ENCODE measurements at regions of chr16 and their contacts with region 1.

Region 1: DNA sequence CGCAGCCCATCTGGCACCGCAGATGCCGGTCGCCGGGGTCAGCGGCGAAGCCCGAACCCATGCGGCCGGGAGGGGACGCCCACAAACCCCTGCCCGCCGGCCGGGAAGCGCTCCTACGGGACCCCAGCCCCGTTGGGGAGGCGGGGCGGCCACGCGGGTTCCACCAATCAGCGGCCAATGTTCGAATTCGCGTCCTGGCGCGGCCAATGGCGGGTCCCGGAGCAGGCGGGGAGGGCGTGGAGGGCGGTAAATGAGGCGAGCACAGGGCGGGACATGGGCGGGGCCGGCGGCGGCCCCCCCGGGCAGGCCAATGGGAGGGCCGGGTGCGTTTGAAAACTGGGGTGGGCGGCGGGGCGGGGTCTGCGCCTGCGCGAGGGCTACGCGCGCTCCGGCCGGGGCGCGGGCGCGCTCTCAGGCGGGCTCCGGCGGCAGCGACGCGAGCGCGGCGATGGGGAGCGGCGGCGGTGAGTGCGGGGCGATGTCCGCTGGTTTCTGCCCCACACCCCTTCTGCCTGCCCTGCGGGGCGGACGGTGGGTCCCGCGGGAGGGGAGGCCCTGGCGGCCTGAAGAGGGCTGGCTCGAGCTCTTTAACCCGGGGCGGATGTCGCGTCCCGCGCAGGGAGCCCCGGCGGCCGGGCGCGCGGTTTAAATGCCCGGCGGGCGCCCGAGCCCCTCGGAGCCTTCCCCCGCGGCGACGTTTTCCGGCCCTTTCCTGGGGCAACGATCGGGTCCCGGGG is at the start of gene CCNF:
- DNase-seq: peak; percentile 95
- H3K4me3 Mint-ChIP-seq: peak within 1 kb of the TSS; percentile 99
- H3K27ac Mint-ChIP-seq: peak within 1 kb of the TSS; percentile 88
- H3K4me1 Mint-ChIP-seq: peaks cover 27% of the 10 kb centered on the region
- H3K27me3 Mint-ChIP-seq: no peaks in the 10 kb centered on the region
- total RNA-seq, gene CCNF: 45.3 and 46.7 TPM in 2 replicates

Region 2: DNA sequence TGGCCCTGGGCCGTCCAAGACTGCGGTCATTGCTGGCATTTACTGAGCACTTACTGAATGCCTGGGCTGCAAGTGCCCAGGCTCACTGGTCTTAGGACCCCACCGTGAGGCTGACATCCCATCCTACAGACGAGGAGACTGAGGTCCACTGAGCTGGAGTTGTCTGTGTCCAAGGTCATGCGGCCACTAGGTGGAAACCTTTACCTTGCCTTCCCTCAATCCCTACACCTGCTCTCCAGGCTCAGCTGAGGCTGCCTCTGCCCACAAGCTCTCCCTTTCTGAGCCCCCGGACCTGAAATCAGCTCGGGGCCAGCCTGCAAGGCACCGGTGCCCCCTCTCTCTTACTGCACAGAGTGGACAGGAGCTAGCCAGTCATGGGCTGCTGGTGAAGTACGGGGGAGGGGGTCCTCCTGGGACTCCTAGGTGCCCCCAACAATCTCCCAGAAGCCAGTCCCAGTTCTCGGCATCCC is 234.3 kb before region 1 on chr16:
- intact Hi-C with region 1: loop called (anchors 10 kb)
- DNase-seq: peak; percentile 25
- H3K4me3 Mint-ChIP-seq: peak overlapping the region; percentile 15
- H3K27ac Mint-ChIP-seq: no peak overlapping the region
- H3K4me1 Mint-ChIP-seq: no peaks in the 10 kb centered on the region
- H3K27me3 Mint-ChIP-seq: peaks cover 32% of the 10 kb centered on the region

Region 3: GRCh38 chr16:2308089-2308962 is 120.9 kb before region 1 on chr16:
- intact Hi-C with region 1: no loop called
- DNase-seq: no peak
- H3K4me3 Mint-ChIP-seq: no peak overlapping the region
- H3K27ac Mint-ChIP-seq: no peak overlapping the region
- H3K4me1 Mint-ChIP-seq: no peaks in the 10 kb centered on the region
- H3K27me3 Mint-ChIP-seq: no peaks in the 10 kb centered on the region

Region 4: GRCh38 chr16:2340564-2341455 is 88.4 kb before region 1 on chr16 and contains the start of gene ABCA3:
- intact Hi-C with region 1: loop called (anchors 2 kb)
- DNase-seq: peak; percentile 98
- H3K4me3 Mint-ChIP-seq: peak within 1 kb of the TSS; percentile 90
- H3K27ac Mint-ChIP-seq: peak within 1 kb of the TSS; percentile 7
- H3K4me1 Mint-ChIP-seq: peaks cover 30% of the 10 kb centered on the region
- H3K27me3 Mint-ChIP-seq: peaks cover 33% of the 10 kb centered on the region
- total RNA-seq, gene ABCA3: 9.0 and 10.0 TPM in 2 replicates

Region 5: GRCh38 chr16:2474877-2475412 is 45.7 kb after region 1 on chr16 and contains the start of gene TBC1D24:
- intact Hi-C with region 1: loop called (anchors 1 kb)
- DNase-seq: peak; percentile 79
- H3K4me3 Mint-ChIP-seq: peak within 1 kb of the TSS; percentile 74
- H3K27ac Mint-ChIP-seq: peak within 1 kb of the TSS; percentile 34
- H3K4me1 Mint-ChIP-seq: peaks cover 4% of the 10 kb centered on the region
- H3K27me3 Mint-ChIP-seq: peaks cover 20% of the 10 kb centered on the region
- total RNA-seq, gene TBC1D24: 19.6 and 24.6 TPM in 2 replicates

Region 6: DNA sequence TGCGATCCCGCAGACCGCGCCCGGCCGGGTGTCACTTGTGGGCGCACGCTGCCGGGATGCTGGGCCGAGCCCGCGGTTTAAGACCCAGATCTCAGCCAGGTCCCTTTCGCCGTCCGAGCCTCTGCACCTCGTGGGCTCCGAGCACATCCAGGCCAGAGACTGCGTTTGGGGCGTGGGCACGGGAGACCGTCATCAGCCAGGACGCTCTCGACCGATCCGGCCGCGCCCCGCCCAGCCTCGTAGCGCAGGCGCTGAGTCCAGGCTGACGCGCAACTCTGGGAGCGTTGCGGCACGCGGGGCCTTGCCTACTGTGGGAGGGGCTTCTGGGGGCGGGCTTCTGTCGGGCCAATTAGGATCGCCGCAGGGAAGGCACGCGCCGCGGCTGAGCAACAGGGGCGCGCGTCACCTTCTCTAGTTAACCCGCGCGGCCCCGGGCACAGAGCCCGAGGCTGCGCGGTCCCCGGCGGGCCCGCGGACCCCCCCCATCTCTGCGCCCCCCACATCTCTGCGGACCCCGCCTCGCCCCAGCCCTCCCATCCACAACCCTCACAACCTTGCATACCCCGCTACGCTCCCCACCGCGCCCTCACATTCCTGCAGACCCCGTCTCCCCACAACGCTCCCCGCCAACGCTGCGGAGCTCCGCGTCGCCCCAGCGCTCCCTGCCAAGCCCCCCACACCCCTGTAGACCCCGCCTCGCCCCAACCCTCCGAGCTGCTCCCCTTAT is 102.7 kb after region 1 on chr16:
- intact Hi-C with region 1: loop called (anchors 1 kb)
- DNase-seq: peak; percentile 97
- H3K4me3 Mint-ChIP-seq: peak overlapping the region; percentile 100
- H3K27ac Mint-ChIP-seq: peak overlapping the region; percentile 100
- H3K4me1 Mint-ChIP-seq: peaks cover 9% of the 10 kb centered on the region
- H3K27me3 Mint-ChIP-seq: no peaks in the 10 kb centered on the region

Measured in activated T-helper 1 cell treated with anti-CD3 and anti-CD28 coated beads, Interleukin-12 subunit alpha, Interleukin-12 subunit beta, Interleukin-2, Interleukin-4 antibody, amounts not matched to agents 30 ng/mL and 10 ng/mL and 1 ng/mL, durations not matched to agents 14 hours and 24 hours and 36 hours (primary cell).